ENCODE measurements at regions of chr2 and their contacts with region 1.

Region 1: GRCh38 chr2:199940373-199940772 is 14.9 kb downstream of the TYW5 start:
- DNase-seq: peak; percentile 31
- H3K4me3 ChIP-seq: no peak overlapping the region
- H3K27ac ChIP-seq: no peak overlapping the region
- H3K4me1 ChIP-seq: no peaks in the 10 kb centered on the region
- H3K27me3 ChIP-seq: no peaks in the 10 kb centered on the region
- CTCF ChIP-seq: peak in 1 of 2 donors; percentile 14
- POLR2A ChIP-seq: no peak

Region 2: GRCh38 chr2:199850718-199851500 is 89.5 kb before region 1 on chr2 and contains the start of gene FTCDNL1:
- CTCF ChIA-PET with region 1: no interaction called
- POLR2A ChIA-PET with region 1: no interaction called
- dilution Hi-C with region 1: no loop called
- intact Hi-C with region 1: loop called (anchors 1 kb)
- DNase-seq: peak; percentile 50
- H3K4me3 ChIP-seq: peak within 1 kb of the TSS; percentile 23 to 72 (median 64)
- H3K27ac ChIP-seq: no peak within 1 kb of the TSS
- H3K4me1 ChIP-seq: peaks cover 2% of the 10 kb centered on the region
- H3K27me3 ChIP-seq: peaks cover 7 to 26% of the 10 kb centered on the region in 2 experiments
- CTCF ChIP-seq: peak; percentile 61 to 64
- POLR2A ChIP-seq: no peak
- total RNA-seq, gene FTCDNL1: 0.27 and 0.65 TPM in 2 replicates